BJ (cell line): ENCODE measurements at regions of chr20 and their contacts with region 1.

Region 1: GRCh38 chr20:266596-267562 is 9.4 kb downstream of the DEFB132 start:
- DNase-seq: no peak
- H3K4me3 ChIP-seq: peak overlapping the region; percentile 39
- H3K27me3 ChIP-seq: peaks cover 3% of the 10 kb centered on the region; the same call in 1 of the 2 replicates
- CTCF ChIP-seq: peak; percentile 98

Region 2: DNA sequence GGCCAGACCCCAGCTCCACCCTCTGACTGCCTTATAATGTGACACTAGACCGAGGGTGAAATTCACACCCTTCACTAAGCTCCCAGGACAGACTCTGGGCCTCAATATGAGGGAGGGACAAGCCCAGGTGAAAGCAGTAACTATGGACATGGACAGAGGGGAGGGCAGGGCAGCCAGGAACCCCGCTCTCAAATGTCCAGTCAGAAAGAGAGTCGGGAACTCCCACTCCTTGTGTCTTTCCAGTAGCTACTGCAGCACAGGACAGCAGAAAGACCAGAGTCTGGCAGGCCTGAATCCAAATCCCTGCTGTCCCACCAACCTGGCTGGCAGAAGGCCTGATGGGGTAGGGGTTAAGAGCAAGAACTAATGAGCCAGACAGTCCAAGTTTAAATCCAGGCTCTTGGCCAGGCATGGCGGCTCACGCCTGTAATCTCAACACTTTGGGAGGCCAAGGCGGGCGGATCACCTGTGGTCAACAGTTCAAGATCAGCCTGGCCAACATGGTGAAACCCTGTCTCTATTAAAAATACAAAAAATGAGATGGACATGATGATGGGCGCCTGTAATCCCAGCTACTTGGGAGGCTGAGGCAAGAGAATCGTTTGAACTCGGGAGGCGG is 17.4 kb after region 1 on chr20:
- CTCF ChIA-PET with region 1: interaction called, 17 read pairs
- POLR2A ChIA-PET with region 1: no interaction called
- DNase-seq: no peak
- H3K4me3 ChIP-seq: no peak overlapping the region
- H3K27me3 ChIP-seq: no peaks in the 10 kb centered on the region
- CTCF ChIP-seq: no peak

Region 3: GRCh38 chr20:872855-873521 is 606.1 kb after region 1 on chr20:
- CTCF ChIA-PET with region 1: no interaction called
- POLR2A ChIA-PET with region 1: no interaction called
- DNase-seq: no peak
- H3K4me3 ChIP-seq: no peak overlapping the region
- H3K27me3 ChIP-seq: no peaks in the 10 kb centered on the region; the same call in 1 of the 2 replicates
- CTCF ChIP-seq: no peak